ENCODE measurements at regions of chr2 and their contacts with region 1.

Region 1: GRCh38 chr2:54455563-54456361 is at the start of gene SPTBN1:
- DNase-seq: peak; percentile 94
- total RNA-seq, gene SPTBN1: 554 TPM

Region 2: DNA sequence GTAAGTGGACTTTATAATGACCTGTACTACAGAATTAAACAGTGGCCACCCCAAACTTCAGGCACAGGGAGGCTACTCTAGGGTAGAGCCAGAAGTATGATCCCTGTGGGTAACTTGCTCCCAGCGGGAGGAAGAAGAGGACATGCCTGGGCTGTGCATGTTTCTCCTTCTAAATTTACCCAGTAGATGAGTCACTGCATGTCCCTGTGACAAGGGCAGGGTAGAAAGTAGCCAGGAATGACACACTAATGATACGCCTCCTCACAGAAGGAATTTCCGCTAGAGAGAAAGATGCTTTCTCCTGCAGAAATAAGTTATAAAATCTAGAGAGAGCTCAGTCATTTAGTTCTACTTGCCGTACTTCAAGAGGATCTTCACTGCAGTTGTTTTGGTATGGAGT is 332.8 kb before region 1 on chr2:
- intact Hi-C with region 1: no loop called
- DNase-seq: no peak

Region 3: DNA sequence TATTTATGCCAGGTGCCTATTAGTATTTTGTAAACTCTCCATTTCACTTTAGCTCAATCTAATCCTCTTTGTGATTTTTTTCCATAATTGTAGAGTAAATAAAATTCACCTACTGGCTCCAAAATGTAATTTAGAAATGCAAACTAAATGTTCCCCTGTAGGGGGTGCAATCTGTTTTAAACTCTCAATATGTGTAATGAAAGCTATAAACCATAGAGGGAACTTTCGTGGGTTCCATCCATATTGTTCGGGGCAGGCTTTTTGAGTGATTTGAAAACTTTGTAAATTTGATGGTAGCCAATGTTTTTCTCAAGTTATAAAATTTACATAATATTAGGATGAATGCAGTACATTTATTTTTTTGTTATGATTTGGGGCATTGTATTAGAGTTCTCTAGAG is 249.2 kb before region 1 on chr2:
- intact Hi-C with region 1: loop called (anchors 5 kb)
- DNase-seq: no peak

Region 4: GRCh38 chr2:54370405-54371104 is 85.2 kb before region 1 on chr2:
- intact Hi-C with region 1: loop called (anchors 5 kb)
- DNase-seq: no peak

Region 5: GRCh38 chr2:54471221-54471711 is 15.5 kb after region 1 on chr2:
- intact Hi-C with region 1: loop called (anchors 2 kb)
- DNase-seq: no peak

Region 6: DNA sequence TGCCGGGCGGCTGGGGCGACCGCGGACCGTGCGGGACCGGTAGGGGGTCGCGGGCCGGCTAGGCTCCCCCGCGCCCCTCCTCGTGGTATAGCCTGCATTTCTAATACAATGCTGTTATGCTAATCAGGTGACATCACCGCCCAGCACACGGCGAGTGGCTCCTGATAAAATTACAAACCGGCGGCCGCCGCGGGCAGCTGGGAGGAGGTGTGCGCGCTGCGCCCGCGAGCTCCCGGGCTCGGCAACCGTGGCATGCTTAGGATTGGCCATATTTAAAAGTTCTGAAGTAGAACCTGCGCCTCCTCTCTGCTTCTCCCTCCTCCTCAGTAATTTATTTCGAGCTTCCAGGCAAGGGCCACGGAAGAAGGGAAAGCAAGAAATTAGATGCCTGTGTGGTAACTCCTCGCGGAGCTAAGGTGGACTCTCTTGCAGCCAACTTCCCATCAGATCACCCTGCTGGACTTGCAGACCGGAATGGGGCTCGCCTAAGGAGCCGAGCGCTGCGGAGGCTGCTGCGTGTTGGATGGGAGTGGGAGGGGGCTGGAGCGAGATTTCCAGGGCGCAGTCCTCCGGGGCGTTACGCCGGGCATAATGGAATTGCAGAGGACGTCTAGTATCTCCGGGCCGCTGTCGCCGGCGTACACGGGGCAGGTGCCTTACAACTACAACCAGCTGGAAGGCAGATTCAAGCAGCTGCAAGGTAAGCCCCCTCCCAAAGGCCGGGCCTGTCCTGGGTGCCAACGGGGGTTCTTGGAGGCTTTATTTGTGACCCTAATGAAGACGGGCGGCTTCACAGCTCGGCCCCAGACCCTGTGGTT is 102.6 kb after region 1 on chr2:
- intact Hi-C with region 1: loop called (anchors 2 kb)
- DNase-seq: peak; percentile 79